Activated CD4-positive, alpha-beta memory T cell treated with anti-CD3 and anti-CD28 coated beads, Interleukin-2, amount 10 ng/mL, durations not matched to agents 7 days and 5 days (primary cell): ENCODE measurements at regions of chrX and their contacts with region 1.

Region 1: GRCh38 chrX:120603707-120604360 is at the start of gene MCTS1:
- DNase-seq: peak; percentile 86
- H3K4me3 Mint-ChIP-seq: peak within 1 kb of the TSS; percentile 98
- H3K27ac Mint-ChIP-seq: peak within 1 kb of the TSS; percentile 100
- H3K4me1 Mint-ChIP-seq: peaks cover 9% of the 10 kb centered on the region
- H3K27me3 Mint-ChIP-seq: peaks cover 2% of the 10 kb centered on the region
- total RNA-seq, gene MCTS1: 52.6 to 53.8 TPM

Region 2: DNA sequence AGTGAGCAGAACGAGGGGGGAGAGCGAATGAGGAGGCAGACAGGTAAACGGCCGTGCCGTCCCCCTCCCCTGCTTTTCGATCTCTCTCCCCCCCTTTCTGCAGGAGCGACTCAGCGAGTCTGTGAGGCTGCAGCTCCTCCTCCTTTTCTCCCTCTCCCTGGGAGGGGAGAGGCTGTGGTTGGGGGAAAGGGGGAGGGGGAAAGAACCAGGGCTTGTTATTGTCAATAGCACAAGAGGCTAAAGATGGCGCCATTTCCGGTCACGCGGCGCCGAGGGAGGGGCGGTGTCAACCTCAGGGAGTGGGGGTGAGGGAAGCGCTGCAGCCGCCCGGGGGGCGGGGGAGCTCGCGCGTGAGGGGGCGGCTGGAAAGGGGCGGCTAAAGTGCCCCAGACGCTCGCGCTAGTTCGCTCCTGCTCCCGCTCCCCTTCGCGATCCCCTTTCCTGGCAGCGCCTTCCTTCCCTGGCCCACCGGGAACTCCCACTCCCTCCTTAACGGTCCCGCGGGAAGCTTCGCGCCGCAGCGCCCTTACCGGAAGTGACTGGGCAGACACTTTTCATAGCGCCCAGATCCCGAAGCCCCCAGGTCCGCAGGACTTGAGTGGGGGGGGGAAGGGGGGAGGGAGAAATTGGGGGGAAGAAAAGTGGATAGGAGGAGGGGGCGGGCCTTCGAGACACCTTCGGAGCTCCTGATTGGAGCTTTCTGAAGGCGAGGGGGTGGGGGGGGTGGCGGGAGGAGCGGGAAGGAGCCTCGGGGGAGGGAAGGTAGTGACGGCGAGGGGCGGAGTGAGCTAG is 42.8 kb before region 1 on chrX and contains the start of gene CUL4B:
- CTCF ChIA-PET with region 1: interaction called, 20 read pairs
- POLR2A ChIA-PET with region 1: interaction called, 138 read pairs
- DNase-seq: peak; percentile 94
- H3K4me3 Mint-ChIP-seq: peak within 1 kb of the TSS; percentile 95
- H3K27ac Mint-ChIP-seq: peak within 1 kb of the TSS; percentile 95
- H3K4me1 Mint-ChIP-seq: peaks cover 24% of the 10 kb centered on the region
- H3K27me3 Mint-ChIP-seq: no peaks in the 10 kb centered on the region
- total RNA-seq, gene CUL4B: 45.5 to 46.1 TPM

Region 3: DNA sequence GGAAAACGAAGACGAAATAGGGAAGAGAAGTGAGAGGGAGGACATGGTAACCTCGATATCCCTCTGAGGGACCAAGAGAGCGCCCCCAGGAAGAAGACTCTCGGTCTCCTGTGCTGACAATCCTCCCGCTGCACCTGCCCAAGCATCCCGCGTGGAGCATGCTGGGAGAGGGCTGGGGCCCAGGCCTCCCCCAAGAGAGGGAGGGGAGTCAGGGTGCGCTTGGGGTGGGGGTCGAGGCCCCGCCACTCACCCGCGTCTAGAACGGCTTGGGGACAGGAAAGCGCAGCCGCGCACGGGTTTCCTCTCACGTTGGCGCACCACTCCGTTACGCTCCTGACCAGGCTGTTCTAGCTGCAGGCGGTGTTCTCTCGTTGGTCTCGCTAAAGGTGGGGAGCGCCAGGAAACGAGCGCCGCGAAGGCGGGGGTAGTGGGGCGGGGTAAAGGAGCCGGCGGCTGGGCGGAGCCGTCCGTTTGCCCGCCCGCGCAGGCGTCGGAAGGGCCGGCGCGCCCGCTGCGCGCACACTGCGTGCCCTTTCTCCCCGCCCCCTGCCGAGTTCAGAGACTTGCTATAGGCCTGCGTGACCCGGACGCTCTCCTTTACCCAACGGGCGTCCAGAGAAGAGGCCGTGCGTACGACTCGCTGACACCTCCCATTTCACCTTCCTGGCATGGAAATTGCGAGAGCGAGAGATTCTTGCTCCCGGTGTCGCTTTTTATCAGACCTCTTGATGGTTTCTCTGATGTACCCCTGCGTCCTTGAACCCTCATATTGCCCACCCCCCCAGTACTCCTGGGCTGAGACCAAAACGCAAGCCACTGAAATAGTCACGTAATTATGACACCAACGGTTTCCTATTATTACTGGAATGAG is 26.1 kb after region 1 on chrX and contains the start of gene C1GALT1C1:
- CTCF ChIA-PET with region 1: interaction called, 4 read pairs
- POLR2A ChIA-PET with region 1: interaction called, 78 read pairs
- DNase-seq: peak; percentile 92
- H3K4me3 Mint-ChIP-seq: peak within 1 kb of the TSS; percentile 83
- H3K27ac Mint-ChIP-seq: peak within 1 kb of the TSS; percentile 94
- H3K4me1 Mint-ChIP-seq: peaks cover 32% of the 10 kb centered on the region
- H3K27me3 Mint-ChIP-seq: no peaks in the 10 kb centered on the region
- total RNA-seq, gene C1GALT1C1: 34.9 to 35.5 TPM